HepG2 (cell line): ENCODE measurements at regions of chr15 and their contacts with region 1.

Region 1: DNA sequence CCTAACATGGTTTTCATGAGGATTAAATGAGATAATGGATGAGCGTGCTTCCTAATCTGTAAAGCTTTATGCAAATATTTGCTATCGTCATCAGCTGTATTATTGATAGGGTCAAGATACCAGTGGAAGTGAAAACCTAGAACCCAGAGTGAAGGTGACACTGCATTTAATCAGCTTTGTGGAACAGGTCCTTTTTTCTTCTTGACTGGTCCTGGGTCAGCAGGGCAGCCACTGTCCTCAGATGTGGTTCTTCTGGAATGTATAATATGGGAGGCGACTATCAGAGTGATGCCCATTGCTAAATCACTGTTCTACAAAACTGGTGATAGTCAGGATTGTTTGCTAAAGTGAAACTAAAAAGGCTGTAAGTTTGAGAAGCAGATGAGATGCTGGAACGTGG is 41.4 kb downstream of the SORD start:
- DNase-seq: peak; percentile 84
- ATAC-seq: peak; percentile 42; the same call in 1 of the 3 replicates
- H3K4me3 ChIP-seq: no peak overlapping the region
- H3K27ac ChIP-seq: no peak overlapping the region
- H3K4me1 ChIP-seq: no peaks in the 10 kb centered on the region
- H3K27me3 ChIP-seq: no peaks in the 10 kb centered on the region
- CTCF ChIP-seq: no peak
- EP300 ChIP-seq: no peak
- POLR2A ChIP-seq: no peak
- RAD21 ChIP-seq: no peak

Region 2: GRCh38 chr15:45100884-45101622 is 36.7 kb after region 1 on chr15:
- CTCF ChIA-PET with region 1: no interaction called
- POLR2A ChIA-PET with region 1: no interaction called
- in situ Hi-C with region 1: no loop called
- intact Hi-C with region 1: no loop called
- DNase-seq: no peak
- ATAC-seq: no peak
- H3K4me3 ChIP-seq: no peak overlapping the region
- H3K27ac ChIP-seq: no peak overlapping the region
- H3K4me1 ChIP-seq: no peaks in the 10 kb centered on the region
- H3K27me3 ChIP-seq: peaks cover 8 to 40% of the 10 kb centered on the region in 2 experiments
- CTCF ChIP-seq: no peak
- EP300 ChIP-seq: no peak
- POLR2A ChIP-seq: no peak
- RAD21 ChIP-seq: no peak

Region 3: GRCh38 chr15:45126535-45127158 is 62.3 kb after region 1 on chr15:
- CTCF ChIA-PET with region 1: no interaction called
- POLR2A ChIA-PET with region 1: no interaction called
- in situ Hi-C with region 1: loop called (anchors 10 kb)
- intact Hi-C with region 1: no loop called
- DNase-seq: peak; percentile 25
- ATAC-seq: peak; percentile 54
- H3K4me3 ChIP-seq: no peak overlapping the region
- H3K27ac ChIP-seq: no peak overlapping the region
- H3K4me1 ChIP-seq: peaks cover 14% of the 10 kb centered on the region
- H3K27me3 ChIP-seq: peaks cover 0 to 3% of the 10 kb centered on the region in 2 experiments; a peak in 2 of 5 replicates
- CTCF ChIP-seq: peak; percentile 55
- EP300 ChIP-seq: no peak
- POLR2A ChIP-seq: no peak
- RAD21 ChIP-seq: 0 out of 2 replicates have a peak, but pooled peaks have one; percentile 23